ENCODE measurements at regions of chr1 and their contacts with region 1.

Region 1: GRCh38 chr1:153990468-153991150 is at the start of gene RPS27:
- DNase-seq: peak; percentile 97
- ATAC-seq: peak; percentile 84
- H3K4me3 ChIP-seq: peak within 1 kb of the TSS; percentile 84 to 100 (median 94)
- H3K4me3 Mint-ChIP-seq: peak within 1 kb of the TSS; percentile 97
- H3K27ac ChIP-seq: peak within 1 kb of the TSS; percentile 93 to 96
- H3K27ac Mint-ChIP-seq: peak within 1 kb of the TSS; percentile 99
- H3K4me1 ChIP-seq: peaks cover 38 to 51% of the 10 kb centered on the region in 2 donors
- H3K4me1 Mint-ChIP-seq: peaks cover 41% of the 10 kb centered on the region
- H3K27me3 ChIP-seq: no peaks in the 10 kb centered on the region
- H3K27me3 Mint-ChIP-seq: no peaks in the 10 kb centered on the region
- CTCF ChIP-seq: no peak
- total RNA-seq, gene RPS27: 4,276 and 4,812 TPM in 2 replicates

Region 2: GRCh38 chr1:153572569-153573015 is 418.0 kb before region 1 on chr1:
- CTCF ChIA-PET with region 1: interaction called, 23 read pairs
- POLR2A ChIA-PET with region 1: no interaction called
- intact Hi-C with region 1: loop called (anchors 2 kb)
- DNase-seq: peak; percentile 76
- ATAC-seq: peak; percentile 89
- H3K4me3 ChIP-seq: no peak overlapping the region
- H3K4me3 Mint-ChIP-seq: no peak overlapping the region
- H3K27ac ChIP-seq: no peak overlapping the region
- H3K27ac Mint-ChIP-seq: peak overlapping the region; percentile 56
- H3K4me1 ChIP-seq: peaks cover 4 to 22% of the 10 kb centered on the region in 2 donors
- H3K4me1 Mint-ChIP-seq: peaks cover 25% of the 10 kb centered on the region
- H3K27me3 ChIP-seq: peaks cover 0 to 2% (median under 1%) of the 10 kb centered on the region in 4 experiments
- H3K27me3 Mint-ChIP-seq: peaks cover 8% of the 10 kb centered on the region
- CTCF ChIP-seq: peak; percentile 80

Region 3: DNA sequence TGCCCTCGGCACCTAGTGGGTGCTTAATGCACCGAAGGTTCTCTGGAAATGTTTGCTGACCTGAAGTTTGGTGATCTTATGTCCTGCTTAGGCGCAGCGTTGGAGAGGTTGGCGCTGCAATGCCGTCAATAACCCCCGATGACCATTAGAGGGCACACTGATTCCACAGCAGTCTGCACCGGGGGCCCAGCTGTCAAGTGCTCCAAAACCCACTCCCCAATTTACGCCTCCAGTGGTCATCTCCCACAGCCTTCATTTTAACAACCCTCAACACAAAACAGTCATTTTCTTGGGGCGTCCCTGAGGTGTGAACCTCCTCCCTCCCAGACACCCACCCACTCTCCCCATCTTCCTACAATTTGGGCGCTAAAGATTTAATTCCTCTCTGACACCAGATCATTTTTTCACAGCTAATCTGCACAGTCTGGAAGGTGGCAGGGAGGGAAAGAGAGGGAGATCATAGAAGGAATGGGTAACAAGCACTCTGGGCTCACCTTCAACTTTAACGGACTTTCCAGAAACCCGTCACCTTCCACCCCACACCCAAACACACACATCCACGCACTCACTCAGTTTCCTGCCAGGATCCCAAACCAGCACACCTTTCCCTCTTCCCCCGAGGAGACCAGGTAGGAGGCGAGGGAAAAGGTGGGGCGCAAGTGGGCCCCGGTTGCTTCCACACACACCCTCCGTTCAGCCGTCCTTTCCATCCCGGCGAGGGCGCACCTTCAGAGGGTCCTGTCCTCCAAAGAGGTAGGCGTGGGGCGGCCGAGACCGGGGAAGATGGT is 312.7 kb before region 1 on chr1:
- CTCF ChIA-PET with region 1: interaction called, 12 read pairs
- POLR2A ChIA-PET with region 1: interaction called, 4 read pairs
- intact Hi-C with region 1: loop called (anchors 1 kb)
- DNase-seq: peak; percentile 73
- ATAC-seq: peak; percentile 77
- H3K4me3 ChIP-seq: peak overlapping the region in 4 of 5 experiments; percentile 28 to 57 (median 50)
- H3K4me3 Mint-ChIP-seq: peak overlapping the region; percentile 94
- H3K27ac ChIP-seq: no peak overlapping the region
- H3K27ac Mint-ChIP-seq: peak overlapping the region; percentile 5
- H3K4me1 ChIP-seq: peaks cover 26 to 30% of the 10 kb centered on the region in 2 donors
- H3K4me1 Mint-ChIP-seq: peaks cover 26% of the 10 kb centered on the region
- H3K27me3 ChIP-seq: peaks cover 0 to 37% (median 24%) of the 10 kb centered on the region in 4 experiments
- H3K27me3 Mint-ChIP-seq: peaks cover 49% of the 10 kb centered on the region
- CTCF ChIP-seq: peak; percentile 88

Region 4: DNA sequence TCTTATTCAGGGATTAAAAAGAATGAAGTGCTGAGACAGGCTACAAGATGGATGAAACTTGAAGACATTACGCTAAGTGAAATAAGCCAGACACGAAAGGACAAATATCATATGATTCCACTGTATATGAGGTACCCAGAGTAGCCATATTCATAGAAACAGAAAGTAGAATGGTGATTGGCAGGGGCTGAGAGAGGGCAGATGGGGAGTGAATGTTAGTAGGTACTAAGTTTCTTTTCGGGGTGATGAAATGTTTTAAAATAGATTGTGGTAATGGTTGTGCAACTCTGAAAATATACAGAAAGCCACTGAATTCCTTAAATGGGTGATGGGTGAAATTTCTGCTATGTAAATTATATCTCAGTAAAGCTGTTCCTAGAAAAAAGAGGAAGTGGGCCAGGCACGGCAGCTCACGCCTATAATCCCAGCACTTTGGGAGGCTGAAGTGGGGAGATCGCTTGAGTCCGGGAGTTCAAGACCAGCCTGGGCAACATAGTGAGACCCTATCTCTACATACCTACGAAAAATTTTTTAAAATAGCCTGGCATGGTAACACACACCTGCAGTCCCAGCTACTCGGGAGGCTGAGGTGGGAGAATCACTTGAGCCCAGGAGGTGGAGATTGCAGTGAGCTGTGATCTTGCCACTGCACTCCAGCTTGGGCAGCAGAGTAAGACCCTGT is 199.5 kb before region 1 on chr1:
- CTCF ChIA-PET with region 1: interaction called, 103 read pairs
- POLR2A ChIA-PET with region 1: interaction called, 19 read pairs
- intact Hi-C with region 1: no loop called
- DNase-seq: peak; percentile 86
- ATAC-seq: peak; percentile 94
- H3K4me3 ChIP-seq: peak overlapping the region in 4 of 5 experiments; percentile 11 to 59 (median 44)
- H3K4me3 Mint-ChIP-seq: peak overlapping the region; percentile 59
- H3K27ac ChIP-seq: peak overlapping the region; percentile 91 to 92
- H3K27ac Mint-ChIP-seq: peak overlapping the region; percentile 95
- H3K4me1 ChIP-seq: peaks cover 28 to 34% of the 10 kb centered on the region in 2 donors
- H3K4me1 Mint-ChIP-seq: peaks cover 36% of the 10 kb centered on the region
- H3K27me3 ChIP-seq: no peaks in the 10 kb centered on the region
- H3K27me3 Mint-ChIP-seq: no peaks in the 10 kb centered on the region
- CTCF ChIP-seq: no peak

Region 5: DNA sequence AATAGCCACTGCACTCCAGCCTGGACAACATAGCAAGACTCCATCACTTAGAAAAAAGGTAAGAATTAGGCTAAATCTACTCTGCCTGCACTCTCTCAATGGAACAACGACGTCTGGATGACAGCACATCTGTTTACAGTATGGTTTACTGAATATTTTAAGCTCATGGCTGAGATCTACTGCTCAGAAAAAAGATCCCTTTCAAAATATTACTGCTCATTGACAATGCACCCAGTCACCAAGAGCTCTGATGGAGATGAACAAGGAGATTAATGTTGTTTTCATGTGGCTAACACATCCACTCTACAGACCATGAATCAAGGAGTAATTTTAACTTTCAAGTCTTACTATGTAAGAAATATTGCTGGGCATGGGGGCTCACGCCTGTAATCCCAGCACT is 157.4 kb before region 1 on chr1:
- CTCF ChIA-PET with region 1: interaction called, 10 read pairs
- POLR2A ChIA-PET with region 1: no interaction called
- intact Hi-C with region 1: no loop called
- DNase-seq: no peak
- ATAC-seq: no peak
- H3K4me3 ChIP-seq: no peak overlapping the region
- H3K4me3 Mint-ChIP-seq: no peak overlapping the region
- H3K27ac ChIP-seq: no peak overlapping the region
- H3K27ac Mint-ChIP-seq: no peak overlapping the region
- H3K4me1 ChIP-seq: no peaks in the 10 kb centered on the region
- H3K4me1 Mint-ChIP-seq: peaks cover 15% of the 10 kb centered on the region
- H3K27me3 ChIP-seq: no peaks in the 10 kb centered on the region
- H3K27me3 Mint-ChIP-seq: no peaks in the 10 kb centered on the region
- CTCF ChIP-seq: no peak

Region 6: DNA sequence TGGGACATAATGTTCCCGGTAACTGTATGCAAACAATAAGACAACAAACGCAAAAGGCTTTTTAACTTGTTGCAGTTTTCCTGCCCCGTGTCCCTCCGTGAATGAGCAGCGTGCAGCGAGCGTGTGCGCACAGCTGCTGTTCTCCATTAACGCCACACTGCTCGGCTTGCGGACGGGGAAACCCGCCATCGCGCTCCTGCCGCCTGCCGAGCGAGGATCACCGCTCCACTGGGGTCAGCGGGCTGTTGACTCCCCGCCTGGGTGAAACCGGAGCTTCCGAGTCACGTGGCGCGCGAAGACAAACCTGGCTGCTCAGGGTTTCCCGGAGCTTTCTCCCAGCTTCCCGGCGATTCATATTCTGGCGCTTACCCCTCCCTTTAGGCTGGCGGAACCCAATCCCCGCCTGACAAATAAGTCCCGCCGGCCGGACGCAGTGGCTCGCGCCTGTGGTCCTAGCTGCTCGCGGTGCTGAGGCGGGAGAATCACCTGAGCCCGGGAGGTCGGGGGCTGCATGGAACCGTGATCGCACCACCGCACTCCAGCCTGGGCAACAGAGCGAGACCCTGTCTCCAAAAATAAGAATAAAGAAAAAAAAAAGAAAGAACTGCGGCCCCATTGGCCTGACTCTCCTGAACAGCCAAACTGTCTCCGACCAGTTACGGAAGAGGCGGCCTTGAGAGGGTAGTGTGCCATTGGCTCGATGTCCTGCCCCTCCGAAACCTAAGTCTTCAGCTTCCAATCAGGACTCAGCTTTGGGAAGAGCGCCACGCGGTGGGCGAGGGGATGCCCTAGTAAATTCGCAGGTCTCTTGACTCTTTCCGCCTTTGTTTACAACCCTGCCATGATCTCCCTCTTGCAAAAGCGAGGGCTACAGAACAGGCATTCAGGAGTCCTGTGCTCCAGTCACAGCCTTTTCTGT is 23.3 kb before region 1 on chr1 and contains the start of gene CREB3L4:
- CTCF ChIA-PET with region 1: interaction called, 26 read pairs
- POLR2A ChIA-PET with region 1: interaction called, 34 read pairs
- intact Hi-C with region 1: no loop called
- DNase-seq: peak; percentile 94
- ATAC-seq: peak; percentile 82
- H3K4me3 ChIP-seq: peak within 1 kb of the TSS; percentile 73 to 95 (median 90)
- H3K4me3 Mint-ChIP-seq: peak within 1 kb of the TSS; percentile 98
- H3K27ac ChIP-seq: peak within 1 kb of the TSS; percentile 91 to 94
- H3K27ac Mint-ChIP-seq: peak within 1 kb of the TSS; percentile 99
- H3K4me1 ChIP-seq: peaks cover 43 to 51% of the 10 kb centered on the region in 2 donors
- H3K4me1 Mint-ChIP-seq: peaks cover 49% of the 10 kb centered on the region
- H3K27me3 ChIP-seq: no peaks in the 10 kb centered on the region
- H3K27me3 Mint-ChIP-seq: no peaks in the 10 kb centered on the region
- CTCF ChIP-seq: peak; percentile 39
- total RNA-seq, gene CREB3L4: 19.9 and 21.8 TPM in 2 replicates

Measured in B cell (primary cell).